ENCODE measurements at regions of chr1 and their contacts with region 1.

Region 1: DNA sequence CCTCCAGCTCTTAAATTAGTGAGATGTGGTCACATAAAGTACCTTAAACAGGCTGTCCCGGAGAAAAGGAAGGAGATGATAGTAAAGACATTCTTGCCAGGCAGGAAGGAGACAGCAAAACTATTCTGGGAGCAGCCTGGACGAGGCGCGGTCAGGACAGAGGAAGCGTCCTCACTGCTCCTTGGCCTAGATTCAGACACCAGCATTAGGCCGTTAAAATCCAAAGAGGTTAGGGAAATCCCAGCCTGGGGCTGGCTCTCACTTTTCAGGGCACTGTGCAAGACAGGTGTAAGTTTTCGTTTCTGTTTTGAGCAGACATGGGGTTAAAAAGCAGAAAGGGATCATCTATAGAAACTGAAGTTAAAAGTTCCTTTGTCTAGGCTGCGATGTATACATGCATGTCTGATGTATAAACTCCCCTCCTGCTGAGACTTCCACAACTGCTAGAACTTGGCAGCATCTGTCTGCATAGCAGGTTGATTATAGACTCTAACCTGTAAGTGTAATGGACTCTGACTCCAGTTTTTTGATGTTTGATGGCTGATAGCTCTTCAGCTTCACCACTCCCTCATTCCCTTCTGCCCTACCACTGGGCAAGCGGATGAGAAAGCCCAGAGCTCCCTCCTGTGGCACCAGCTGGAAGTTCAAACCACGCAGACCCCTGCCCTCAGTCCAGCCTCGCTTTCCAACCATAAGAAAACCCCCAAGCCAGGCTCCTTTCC is 21.5 kb downstream of the STPG1 start:
- DNase-seq: no peak
- H3K4me3 ChIP-seq: no peak overlapping the region
- H3K27me3 ChIP-seq: no peaks in the 10 kb centered on the region
- CTCF ChIP-seq: peak; percentile 84

Region 2: GRCh38 chr1:22850681-22851080 is 1541.4 kb before region 1 on chr1:
- CTCF ChIA-PET with region 1: no interaction called
- POLR2A ChIA-PET with region 1: no interaction called
- DNase-seq: no peak
- H3K4me3 ChIP-seq: no peak overlapping the region
- H3K27me3 ChIP-seq: no peaks in the 10 kb centered on the region; the same call in 1 of the 2 replicates
- CTCF ChIP-seq: no peak

Region 3: GRCh38 chr1:24070821-24071393 is 321.1 kb before region 1 on chr1:
- CTCF ChIA-PET with region 1: interaction called, 14 read pairs
- POLR2A ChIA-PET with region 1: no interaction called
- DNase-seq: peak; percentile 9
- H3K4me3 ChIP-seq: no peak overlapping the region
- H3K27me3 ChIP-seq: peaks cover 1% of the 10 kb centered on the region
- CTCF ChIP-seq: peak; percentile 89

Region 4: GRCh38 chr1:24201941-24202440 is 190.1 kb before region 1 on chr1:
- CTCF ChIA-PET with region 1: interaction called, 437 read pairs
- POLR2A ChIA-PET with region 1: interaction called, 3 read pairs
- DNase-seq: peak; percentile 55
- H3K4me3 ChIP-seq: no peak overlapping the region
- H3K27me3 ChIP-seq: peaks cover 7% of the 10 kb centered on the region; the same call in 1 of the 2 replicates
- CTCF ChIP-seq: peak; percentile 78

Region 5: GRCh38 chr1:24301785-24302175 is 90.3 kb before region 1 on chr1:
- CTCF ChIA-PET with region 1: interaction called, 11 read pairs
- POLR2A ChIA-PET with region 1: no interaction called
- DNase-seq: no peak
- H3K4me3 ChIP-seq: no peak overlapping the region
- H3K27me3 ChIP-seq: peaks cover 34% of the 10 kb centered on the region
- CTCF ChIP-seq: no peak

Region 6: DNA sequence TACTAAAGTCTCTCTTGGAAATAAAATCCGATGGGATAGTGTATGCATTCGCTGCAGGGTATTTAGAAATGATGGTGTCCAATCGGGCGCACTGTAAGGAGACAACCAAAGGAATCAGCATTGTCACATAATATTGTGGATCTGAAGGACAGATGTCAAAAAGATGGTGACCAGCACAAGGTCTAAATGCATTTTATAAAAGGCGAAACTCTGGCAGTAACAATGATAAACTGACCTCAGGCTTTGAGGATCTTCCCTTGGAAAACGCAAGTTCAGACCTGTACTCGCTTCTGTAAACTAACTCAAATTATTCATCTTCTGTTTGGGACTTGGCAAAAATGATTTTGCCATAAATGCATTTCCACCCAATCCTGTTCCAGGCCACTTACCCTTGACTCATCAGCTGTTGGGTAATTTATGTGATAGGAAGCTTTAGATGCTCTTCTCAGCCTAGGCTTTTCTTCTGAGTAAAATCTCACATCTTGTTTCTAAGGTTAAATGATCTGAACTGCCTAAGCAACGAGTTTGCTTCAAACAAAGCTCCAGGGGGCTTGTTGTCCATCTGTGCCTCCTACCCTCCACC is 12.2 kb before region 1 on chr1:
- CTCF ChIA-PET with region 1: interaction called, 22 read pairs
- POLR2A ChIA-PET with region 1: interaction called, 3 read pairs
- DNase-seq: no peak
- H3K4me3 ChIP-seq: no peak overlapping the region
- H3K27me3 ChIP-seq: no peaks in the 10 kb centered on the region
- CTCF ChIP-seq: no peak

Region 7: GRCh38 chr1:24415334-24415909 is 23.4 kb after region 1 on chr1 and contains the start of gene NIPAL3:
- CTCF ChIA-PET with region 1: interaction called, 44 read pairs
- POLR2A ChIA-PET with region 1: no interaction called
- DNase-seq: peak; percentile 94
- H3K4me3 ChIP-seq: peak within 1 kb of the TSS; percentile 72
- H3K27me3 ChIP-seq: no peaks in the 10 kb centered on the region
- CTCF ChIP-seq: peak; percentile 85
- polyA plus RNA-seq, gene NIPAL3: 59.4 and 74.5 TPM in 2 replicates